H1 (cell line): ENCODE measurements at regions of chr2 and their contacts with region 1.

Region 1: DNA sequence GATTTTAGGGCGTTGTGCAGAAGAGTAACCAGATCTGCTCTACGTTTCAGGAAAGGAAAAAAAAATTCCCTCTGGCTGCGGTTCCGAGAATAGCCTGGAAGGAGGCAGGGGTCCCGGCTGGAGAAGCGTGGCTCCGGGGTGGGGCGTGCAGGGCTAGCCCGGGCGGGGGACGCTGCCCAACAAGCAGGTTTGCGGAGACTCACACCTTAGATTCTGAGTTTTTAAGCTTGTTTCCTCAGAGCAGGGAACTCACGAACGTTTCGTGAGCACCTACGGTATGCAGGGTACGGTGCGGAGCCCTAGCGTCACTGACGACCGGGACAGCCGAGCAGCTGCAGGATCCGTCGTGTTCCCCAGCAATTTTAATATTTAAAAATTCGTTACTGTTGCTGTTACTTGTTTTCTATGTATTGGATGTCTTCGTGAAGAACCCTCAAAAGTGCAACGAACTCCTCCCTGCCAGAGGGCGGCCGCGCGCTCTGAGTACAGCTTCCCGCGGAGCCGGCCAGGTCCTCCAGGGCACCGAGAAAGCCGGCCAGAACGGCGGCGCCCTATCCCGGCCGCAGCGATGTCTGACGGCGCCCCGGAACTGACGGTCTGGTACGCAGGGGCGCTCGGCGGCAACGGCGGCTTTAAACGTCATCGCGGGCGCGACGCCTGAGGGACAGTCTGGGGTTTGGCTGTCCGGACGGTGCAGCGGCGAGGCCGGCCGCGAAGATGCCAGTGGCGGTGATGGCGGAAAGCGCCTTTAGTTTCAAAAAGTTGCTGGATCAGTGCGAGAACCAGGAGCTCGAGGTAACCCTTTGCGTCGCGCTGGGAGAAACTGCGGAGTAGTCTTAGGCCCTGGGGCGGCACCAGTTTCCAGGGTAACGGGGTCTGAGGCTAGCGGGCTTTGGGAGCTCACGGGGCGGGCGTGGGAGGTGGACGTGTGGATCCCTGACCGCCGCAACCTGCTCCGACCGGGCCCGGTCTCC is at the start of gene COPS8:
- DNase-seq: peak; percentile 68 to 96
- H3K4me3 ChIP-seq: peak within 1 kb of the TSS; percentile 77 to 91 (median 88)
- H3K27ac ChIP-seq: peak within 1 kb of the TSS; percentile 65; the same call in 1 of the 2 replicates
- H3K4me1 ChIP-seq: no peaks in the 10 kb centered on the region
- H3K27me3 ChIP-seq: no peaks in the 10 kb centered on the region
- CTCF ChIP-seq: peak in 1 of 3 experiments; percentile 23; a peak in 2 of 4 replicates
- EP300 ChIP-seq: peak in 1 of 2 experiments; percentile 75; a peak in 1 of 3 replicates
- POLR2A ChIP-seq: peak; percentile 93 to 96
- RAD21 ChIP-seq: no peak; a peak in 1 of 4 replicates
- total RNA-seq, gene COPS8: 59.3 and 61.3 TPM in 2 replicates

Region 2: GRCh38 chr2:237072067-237072931 is 13.2 kb before region 1 on chr2:
- CTCF ChIA-PET with region 1: interaction called, 20 read pairs
- POLR2A ChIA-PET with region 1: interaction called, 4 read pairs
- DNase-seq: peak in 1 of 2 experiments; percentile 99
- H3K4me3 ChIP-seq: no peak overlapping the region
- H3K27ac ChIP-seq: no peak overlapping the region
- H3K4me1 ChIP-seq: no peaks in the 10 kb centered on the region
- H3K27me3 ChIP-seq: no peaks in the 10 kb centered on the region
- CTCF ChIP-seq: peak; percentile 84 to 90 (median 86)
- EP300 ChIP-seq: no peak
- POLR2A ChIP-seq: no peak
- RAD21 ChIP-seq: peak; percentile 94 to 95

Region 3: GRCh38 chr2:237096911-237097310 is 11.4 kb after region 1 on chr2:
- CTCF ChIA-PET with region 1: interaction called, 5 read pairs
- POLR2A ChIA-PET with region 1: interaction called, 15 read pairs
- DNase-seq: no peak
- H3K4me3 ChIP-seq: no peak overlapping the region
- H3K27ac ChIP-seq: no peak overlapping the region
- H3K4me1 ChIP-seq: no peaks in the 10 kb centered on the region; a peak in 1 of 7 replicates
- H3K27me3 ChIP-seq: no peaks in the 10 kb centered on the region
- CTCF ChIP-seq: no peak
- EP300 ChIP-seq: no peak
- POLR2A ChIP-seq: no peak
- RAD21 ChIP-seq: no peak

Region 4: DNA sequence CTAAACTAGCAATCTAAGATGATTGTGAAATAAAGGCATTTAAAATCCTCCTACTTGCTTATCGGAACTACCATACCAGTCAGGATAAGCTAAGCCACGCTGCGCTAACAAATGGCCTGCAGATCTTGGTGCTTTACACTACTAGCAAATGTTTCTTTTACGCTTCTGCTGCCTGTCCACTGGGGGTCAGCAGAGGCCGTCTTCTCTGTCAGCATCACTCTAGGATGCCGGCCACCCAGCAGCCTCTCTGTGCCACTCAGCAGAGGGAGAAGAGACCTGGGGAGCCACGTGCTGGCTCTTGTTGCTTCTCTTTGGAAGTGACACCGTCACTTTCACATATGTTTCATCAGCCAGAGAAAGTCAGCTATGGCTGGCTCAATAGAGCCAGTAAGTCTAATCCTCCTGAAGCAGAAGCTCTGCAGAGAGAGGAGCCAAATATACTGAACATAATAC is 36.7 kb after region 1 on chr2:
- CTCF ChIA-PET with region 1: interaction called, 12 read pairs
- POLR2A ChIA-PET with region 1: interaction called, 11 read pairs
- DNase-seq: peak; percentile 44 to 81
- H3K4me3 ChIP-seq: no peak overlapping the region
- H3K27ac ChIP-seq: no peak overlapping the region
- H3K4me1 ChIP-seq: no peaks in the 10 kb centered on the region
- H3K27me3 ChIP-seq: no peaks in the 10 kb centered on the region
- CTCF ChIP-seq: peak; percentile 64 to 82 (median 75)
- EP300 ChIP-seq: no peak
- POLR2A ChIP-seq: no peak
- RAD21 ChIP-seq: peak; percentile 80 to 88